GM12878 (cell line): ENCODE measurements at regions of chr12 and their contacts with region 1.

Region 1: DNA sequence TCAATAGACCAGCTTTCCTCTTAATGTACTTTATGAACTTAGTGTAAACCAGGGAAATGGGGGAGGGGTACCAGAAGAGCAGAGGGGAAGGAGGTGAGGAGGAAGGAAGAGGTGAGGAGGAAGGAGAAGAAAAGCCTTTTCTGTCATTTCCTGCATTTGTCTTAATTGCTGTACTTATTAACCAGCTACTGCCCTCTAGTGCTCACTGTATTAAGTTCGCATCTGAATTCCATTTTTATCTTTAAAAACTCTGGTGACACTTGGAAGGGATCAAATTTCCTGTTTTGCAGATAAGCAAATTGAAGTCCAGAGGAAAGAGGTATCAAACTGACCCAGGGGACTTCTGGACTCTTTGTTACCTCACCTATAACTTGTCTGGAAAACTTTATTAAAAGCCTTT is 22.2 kb downstream of the MANSC1 start:
- DNase-seq: peak; percentile 25
- ATAC-seq: peak; percentile 74
- H3K4me3 ChIP-seq: no peak overlapping the region
- H3K27ac ChIP-seq: no peak overlapping the region
- H3K4me1 ChIP-seq: no peaks in the 10 kb centered on the region
- H3K27me3 ChIP-seq: no peaks in the 10 kb centered on the region
- CTCF ChIP-seq: peak; percentile 56 to 76 (median 74); a peak in 5 of 6 replicates
- EP300 ChIP-seq: no peak
- POLR2A ChIP-seq: no peak
- RAD21 ChIP-seq: peak; percentile 85

Region 2: DNA sequence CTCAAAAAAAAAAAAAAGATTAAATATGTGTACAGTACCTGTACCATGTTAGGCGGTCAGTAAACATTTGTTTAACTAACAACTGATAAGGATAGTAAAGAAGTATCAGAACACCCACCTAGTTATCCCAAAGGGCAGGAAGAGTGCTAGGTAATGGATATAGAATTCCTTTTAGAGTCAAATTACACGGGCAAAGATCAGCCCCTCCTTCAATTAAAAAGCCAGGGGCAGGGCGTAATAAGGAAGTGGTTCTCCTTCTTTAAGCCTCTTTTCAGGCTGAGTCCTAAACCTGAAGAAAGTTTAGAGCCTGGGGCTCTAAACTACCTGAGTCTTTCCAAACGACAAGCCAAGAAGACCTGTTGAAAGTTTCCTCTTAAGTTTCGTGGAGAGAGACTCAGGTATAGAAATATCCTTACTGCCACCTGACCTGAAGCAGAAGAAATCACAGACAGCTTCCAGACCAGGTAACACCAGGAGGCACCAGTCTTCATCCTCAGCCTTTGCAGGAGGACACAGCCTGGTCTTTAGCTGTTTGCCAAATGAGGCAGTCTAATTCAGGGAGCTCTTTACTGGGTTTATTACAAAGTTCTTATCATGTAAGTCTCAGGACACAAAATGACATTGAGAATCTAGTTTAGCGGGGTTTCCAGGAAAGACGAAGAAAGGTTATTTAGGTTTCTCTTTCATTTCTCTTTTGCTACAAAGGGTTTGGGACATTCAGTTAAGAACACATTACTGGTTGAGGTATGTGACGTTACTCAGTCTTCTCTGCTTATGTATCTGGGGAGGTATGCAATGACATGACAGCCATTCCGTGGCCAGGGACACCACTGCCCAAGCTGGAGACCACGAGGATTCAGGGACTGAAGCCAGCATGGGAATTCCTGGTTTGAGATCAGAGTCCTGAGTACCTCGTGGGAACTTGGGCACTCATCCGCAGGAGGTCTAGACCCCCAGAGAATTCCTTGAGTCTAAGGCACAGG is 256.8 kb before region 1 on chr12 and contains the start of gene BCL2L14:
- CTCF ChIA-PET with region 1: interaction called, 29 read pairs
- POLR2A ChIA-PET with region 1: no interaction called
- RAD21 ChIA-PET with region 1: no interaction called
- SMC1A ChIA-PET with region 1: interaction called, 4 read pairs
- in situ Hi-C with region 1: no loop called
- intact Hi-C with region 1: no loop called
- DNase-seq: peak; percentile 36
- ATAC-seq: peak; percentile 86
- H3K4me3 ChIP-seq: peak within 1 kb of the TSS; percentile 72
- H3K27ac ChIP-seq: peak within 1 kb of the TSS; percentile 70
- H3K4me1 ChIP-seq: peaks cover 7% of the 10 kb centered on the region
- H3K27me3 ChIP-seq: no peaks in the 10 kb centered on the region
- CTCF ChIP-seq: no peak; a peak in 1 of 6 replicates
- EP300 ChIP-seq: no peak
- POLR2A ChIP-seq: no peak
- RAD21 ChIP-seq: no peak
- polyA plus RNA-seq, gene BCL2L14: 0.62 to 0.64 TPM

Region 3: GRCh38 chr12:12081836-12082497 is 245.8 kb before region 1 on chr12:
- CTCF ChIA-PET with region 1: interaction called, 214 read pairs
- POLR2A ChIA-PET with region 1: interaction called, 6 read pairs
- RAD21 ChIA-PET with region 1: interaction called, 58 read pairs
- SMC1A ChIA-PET with region 1: interaction called, 112 read pairs
- in situ Hi-C with region 1: loop called (anchors 5 kb)
- intact Hi-C with region 1: loop called (anchors 2 kb)
- DNase-seq: peak; percentile 39
- ATAC-seq: peak; percentile 96
- H3K4me3 ChIP-seq: no peak overlapping the region
- H3K27ac ChIP-seq: no peak overlapping the region
- H3K4me1 ChIP-seq: no peaks in the 10 kb centered on the region
- H3K27me3 ChIP-seq: no peaks in the 10 kb centered on the region
- CTCF ChIP-seq: peak; percentile 33 to 54 (median 34); a peak in 4 of 6 replicates
- EP300 ChIP-seq: no peak
- POLR2A ChIP-seq: no peak
- RAD21 ChIP-seq: peak; percentile 80

Region 4: GRCh38 chr12:12171991-12172521 is 155.7 kb before region 1 on chr12:
- CTCF ChIA-PET with region 1: interaction called, 13 read pairs
- POLR2A ChIA-PET with region 1: no interaction called
- RAD21 ChIA-PET with region 1: interaction called, 5 read pairs
- SMC1A ChIA-PET with region 1: interaction called, 7 read pairs
- in situ Hi-C with region 1: no loop called
- intact Hi-C with region 1: loop called (anchors 10 kb)
- DNase-seq: peak; percentile 90
- ATAC-seq: peak; percentile 95
- H3K4me3 ChIP-seq: no peak overlapping the region
- H3K27ac ChIP-seq: no peak overlapping the region
- H3K4me1 ChIP-seq: peaks cover 15% of the 10 kb centered on the region
- H3K27me3 ChIP-seq: no peaks in the 10 kb centered on the region
- CTCF ChIP-seq: no peak; a peak in 1 of 6 replicates
- EP300 ChIP-seq: peak; percentile 69 to 76; a peak in 3 of 4 replicates
- POLR2A ChIP-seq: no peak
- RAD21 ChIP-seq: 0 out of 2 replicates have a peak, but pooled peaks have one; percentile 34

Region 5: GRCh38 chr12:12224240-12224940 is 103.4 kb before region 1 on chr12:
- CTCF ChIA-PET with region 1: interaction called, 4 read pairs
- POLR2A ChIA-PET with region 1: no interaction called
- RAD21 ChIA-PET with region 1: no interaction called
- SMC1A ChIA-PET with region 1: no interaction called
- in situ Hi-C with region 1: no loop called
- intact Hi-C with region 1: loop called (anchors 5 kb)
- DNase-seq: no peak
- ATAC-seq: peak; percentile 81
- H3K4me3 ChIP-seq: no peak overlapping the region
- H3K27ac ChIP-seq: no peak overlapping the region
- H3K4me1 ChIP-seq: peaks cover 8% of the 10 kb centered on the region
- H3K27me3 ChIP-seq: no peaks in the 10 kb centered on the region
- CTCF ChIP-seq: no peak
- EP300 ChIP-seq: peak; percentile 61 to 64; a peak in 2 of 4 replicates
- POLR2A ChIP-seq: no peak
- RAD21 ChIP-seq: no peak

Region 6: GRCh38 chr12:12266873-12267741 is 60.7 kb before region 1 on chr12 and contains the start of gene LRP6:
- CTCF ChIA-PET with region 1: interaction called, 15 read pairs
- POLR2A ChIA-PET with region 1: interaction called, 6 read pairs
- RAD21 ChIA-PET with region 1: no interaction called
- SMC1A ChIA-PET with region 1: no interaction called
- in situ Hi-C with region 1: no loop called
- intact Hi-C with region 1: no loop called
- DNase-seq: peak; percentile 40
- ATAC-seq: peak; percentile 92
- H3K4me3 ChIP-seq: peak within 1 kb of the TSS; percentile 92
- H3K27ac ChIP-seq: peak within 1 kb of the TSS; percentile 80
- H3K4me1 ChIP-seq: no peaks in the 10 kb centered on the region
- H3K27me3 ChIP-seq: no peaks in the 10 kb centered on the region
- CTCF ChIP-seq: no peak
- EP300 ChIP-seq: no peak
- POLR2A ChIP-seq: peak; percentile 80
- RAD21 ChIP-seq: no peak
- polyA plus RNA-seq, gene LRP6: 1.5 to 8.4 TPM